WTC11 (cell line): ENCODE measurements at regions of chr11 and their contacts with region 1.

Region 1: GRCh38 chr11:112555491-112556364 is 295.1 kb upstream of the PLET1 start:
- DNase-seq: peak; percentile 86
- ATAC-seq: peak; percentile 93
- H3K4me3 Mint-ChIP-seq: no peak overlapping the region
- H3K27ac Mint-ChIP-seq: no peak overlapping the region
- H3K4me1 Mint-ChIP-seq: peaks cover 12% of the 10 kb centered on the region
- H3K27me3 Mint-ChIP-seq: no peaks in the 10 kb centered on the region; the same call in 1 of the 2 replicates
- CTCF ChIP-seq: peak; percentile 57

Region 2: GRCh38 chr11:112241486-112241885 is 314.2 kb before region 1 on chr11:
- CTCF ChIA-PET with region 1: no interaction called
- POLR2A ChIA-PET with region 1: no interaction called
- DNase-seq: no peak
- ATAC-seq: no peak
- H3K4me3 Mint-ChIP-seq: no peak overlapping the region
- H3K27ac Mint-ChIP-seq: no peak overlapping the region
- H3K4me1 Mint-ChIP-seq: no peaks in the 10 kb centered on the region
- H3K27me3 Mint-ChIP-seq: peaks cover 6% of the 10 kb centered on the region; the same call in 1 of the 2 replicates
- CTCF ChIP-seq: no peak

Region 3: GRCh38 chr11:112345708-112346107 is 210.0 kb before region 1 on chr11:
- CTCF ChIA-PET with region 1: interaction called, 13 read pairs
- POLR2A ChIA-PET with region 1: no interaction called
- DNase-seq: peak; percentile 42
- ATAC-seq: peak; percentile 91
- H3K4me3 Mint-ChIP-seq: no peak overlapping the region
- H3K27ac Mint-ChIP-seq: no peak overlapping the region
- H3K4me1 Mint-ChIP-seq: peaks cover 6% of the 10 kb centered on the region
- H3K27me3 Mint-ChIP-seq: no peaks in the 10 kb centered on the region; the same call in 1 of the 2 replicates
- CTCF ChIP-seq: 0 out of 2 replicates have a peak, but pooled peaks have one; percentile 16

Region 4: DNA sequence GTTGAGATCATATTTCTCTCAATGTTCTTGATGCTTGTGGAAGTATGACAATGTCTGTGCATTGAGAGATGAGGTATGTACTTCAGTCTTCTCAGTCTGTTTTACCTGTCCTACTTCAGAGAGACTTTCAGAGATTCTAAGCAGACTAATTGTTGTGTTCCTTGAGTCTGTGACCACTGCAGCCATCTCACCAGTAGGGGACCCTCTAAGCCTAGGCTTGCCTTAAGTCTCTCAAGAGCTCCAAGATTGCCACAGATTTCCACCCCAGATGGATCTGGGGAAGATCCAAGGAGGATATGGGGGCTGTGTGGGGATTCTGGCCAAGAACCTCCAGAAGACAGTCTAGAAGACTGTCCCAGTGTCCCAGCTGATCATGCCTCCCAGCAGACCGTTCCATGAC is 115.2 kb before region 1 on chr11:
- CTCF ChIA-PET with region 1: interaction called, 50 read pairs
- POLR2A ChIA-PET with region 1: no interaction called
- DNase-seq: peak; percentile 62
- ATAC-seq: peak; percentile 96
- H3K4me3 Mint-ChIP-seq: no peak overlapping the region
- H3K27ac Mint-ChIP-seq: no peak overlapping the region
- H3K4me1 Mint-ChIP-seq: peaks cover 4% of the 10 kb centered on the region
- H3K27me3 Mint-ChIP-seq: peaks cover 4% of the 10 kb centered on the region
- CTCF ChIP-seq: peak; percentile 67

Region 5: DNA sequence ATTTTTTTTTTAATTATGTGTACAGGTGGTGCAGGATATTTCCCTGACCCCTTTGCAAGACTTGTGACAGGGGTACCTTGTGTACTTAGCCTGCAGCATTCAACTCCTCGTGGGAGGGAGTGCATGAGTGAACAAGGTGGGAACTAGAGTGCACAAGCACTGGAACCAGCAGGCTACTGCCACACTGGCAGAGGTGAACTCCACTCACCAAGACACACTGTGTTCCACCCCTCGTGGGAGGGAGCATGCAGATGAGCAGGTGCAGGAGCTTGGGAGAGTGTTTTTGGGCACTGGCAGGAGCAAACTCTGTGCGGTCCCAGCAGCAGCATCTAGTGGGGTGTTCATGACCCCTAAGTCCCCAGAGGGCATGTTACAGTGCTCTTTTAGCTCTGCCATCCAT is 12.3 kb before region 1 on chr11:
- CTCF ChIA-PET with region 1: interaction called, 38 read pairs
- POLR2A ChIA-PET with region 1: no interaction called
- DNase-seq: no peak
- ATAC-seq: no peak
- H3K4me3 Mint-ChIP-seq: no peak overlapping the region
- H3K27ac Mint-ChIP-seq: no peak overlapping the region
- H3K4me1 Mint-ChIP-seq: peaks cover 17% of the 10 kb centered on the region
- H3K27me3 Mint-ChIP-seq: peaks cover 11% of the 10 kb centered on the region
- CTCF ChIP-seq: no peak

Region 6: DNA sequence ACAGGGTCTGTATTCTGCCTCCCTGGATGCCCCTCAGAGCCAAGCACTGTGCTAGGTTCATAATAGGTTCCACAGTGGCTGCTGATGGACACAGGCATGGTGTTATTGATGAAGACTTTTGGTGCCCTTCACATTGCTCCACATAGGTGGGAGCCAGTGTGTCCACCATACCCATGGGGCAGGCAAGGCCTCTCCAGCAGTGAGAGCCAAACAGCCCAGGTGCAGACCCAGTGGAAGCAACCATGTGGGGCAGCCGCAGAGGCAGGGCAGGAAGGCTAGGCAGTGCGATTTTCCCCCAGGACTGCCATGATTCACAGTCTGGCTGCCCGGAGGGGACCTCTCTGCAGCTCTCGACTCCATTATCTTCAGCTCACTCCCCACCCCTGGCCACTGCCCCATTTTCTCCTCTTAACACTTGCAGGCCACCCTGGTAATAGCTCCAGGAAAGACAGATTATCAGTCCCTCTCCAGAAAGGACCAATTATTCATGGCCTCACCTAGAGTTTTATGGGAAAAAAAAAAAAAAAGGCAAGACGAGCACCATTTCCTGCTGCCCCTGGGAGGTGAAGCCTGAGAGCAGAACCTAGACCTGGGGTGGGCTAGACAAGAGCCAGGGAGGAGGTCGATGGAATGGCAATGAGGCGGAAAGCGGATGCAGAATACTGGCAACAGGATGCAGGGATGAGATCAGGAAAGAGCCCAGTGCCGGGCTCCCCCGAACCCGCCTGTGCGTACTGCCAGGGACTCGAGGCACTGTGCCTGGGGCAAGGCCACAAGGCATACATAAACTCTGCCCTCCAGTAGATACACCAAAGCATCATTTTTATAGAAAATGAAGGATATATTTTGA is 62.5 kb after region 1 on chr11:
- CTCF ChIA-PET with region 1: no interaction called
- POLR2A ChIA-PET with region 1: no interaction called
- DNase-seq: no peak
- ATAC-seq: peak; percentile 46
- H3K4me3 Mint-ChIP-seq: no peak overlapping the region
- H3K27ac Mint-ChIP-seq: no peak overlapping the region
- H3K4me1 Mint-ChIP-seq: peaks cover 20% of the 10 kb centered on the region
- H3K27me3 Mint-ChIP-seq: no peaks in the 10 kb centered on the region; the same call in 1 of the 2 replicates
- CTCF ChIP-seq: no peak